HEK293T (cell line): ENCODE measurements at regions of chr6 and their contacts with region 1.

Region 1: GRCh38 chr6:145814501-145815308 is at the start of gene FBXO30:
- DNase-seq: peak; percentile 95

Region 2: GRCh38 chr6:145734486-145735355 is 80.0 kb before region 1 on chr6:
- CTCF ChIA-PET with region 1: interaction called, 5 read pairs
- POLR2A ChIA-PET with region 1: interaction called, 63 read pairs
- DNase-seq: peak; percentile 84

Region 3: GRCh38 chr6:145763742-145764141 is 51.0 kb before region 1 on chr6:
- CTCF ChIA-PET with region 1: no interaction called
- POLR2A ChIA-PET with region 1: no interaction called
- DNase-seq: no peak

Region 4: GRCh38 chr6:145801021-145801420 is 13.7 kb before region 1 on chr6:
- CTCF ChIA-PET with region 1: no interaction called
- POLR2A ChIA-PET with region 1: interaction called, 10 read pairs
- DNase-seq: no peak

Region 5: GRCh38 chr6:145842693-145843546 is 28.2 kb after region 1 on chr6:
- CTCF ChIA-PET with region 1: no interaction called
- POLR2A ChIA-PET with region 1: interaction called, 10 read pairs
- DNase-seq: no peak

Region 6: GRCh38 chr6:145924600-145924999 is 109.9 kb after region 1 on chr6:
- CTCF ChIA-PET with region 1: no interaction called
- POLR2A ChIA-PET with region 1: no interaction called
- DNase-seq: no peak